Naive thymus-derived CD4-positive, alpha-beta T cell (primary cell): ENCODE measurements at regions of chr7 and their contacts with region 1.

Region 1: GRCh38 chr7:26667500-26668133 is 196.8 kb downstream of the SKAP2 start:
- DNase-seq: peak in 8 of 9 donors; percentile 39 to 78 (median 64)
- ATAC-seq: peak; percentile 77
- H3K4me3 ChIP-seq: no peak overlapping the region
- H3K4me3 Mint-ChIP-seq: no peak overlapping the region
- H3K27ac ChIP-seq: no peak overlapping the region
- H3K27ac Mint-ChIP-seq: no peak overlapping the region
- H3K4me1 ChIP-seq: peaks cover 0 to 4% of the 10 kb centered on the region in 2 donors
- H3K4me1 Mint-ChIP-seq: peaks cover 0 to 23% (median 17%) of the 10 kb centered on the region in 7 donors
- H3K27me3 ChIP-seq: no peaks in the 10 kb centered on the region
- H3K27me3 Mint-ChIP-seq: peaks cover 9 to 61% (median 14%) of the 10 kb centered on the region in 5 donors

Region 2: DNA sequence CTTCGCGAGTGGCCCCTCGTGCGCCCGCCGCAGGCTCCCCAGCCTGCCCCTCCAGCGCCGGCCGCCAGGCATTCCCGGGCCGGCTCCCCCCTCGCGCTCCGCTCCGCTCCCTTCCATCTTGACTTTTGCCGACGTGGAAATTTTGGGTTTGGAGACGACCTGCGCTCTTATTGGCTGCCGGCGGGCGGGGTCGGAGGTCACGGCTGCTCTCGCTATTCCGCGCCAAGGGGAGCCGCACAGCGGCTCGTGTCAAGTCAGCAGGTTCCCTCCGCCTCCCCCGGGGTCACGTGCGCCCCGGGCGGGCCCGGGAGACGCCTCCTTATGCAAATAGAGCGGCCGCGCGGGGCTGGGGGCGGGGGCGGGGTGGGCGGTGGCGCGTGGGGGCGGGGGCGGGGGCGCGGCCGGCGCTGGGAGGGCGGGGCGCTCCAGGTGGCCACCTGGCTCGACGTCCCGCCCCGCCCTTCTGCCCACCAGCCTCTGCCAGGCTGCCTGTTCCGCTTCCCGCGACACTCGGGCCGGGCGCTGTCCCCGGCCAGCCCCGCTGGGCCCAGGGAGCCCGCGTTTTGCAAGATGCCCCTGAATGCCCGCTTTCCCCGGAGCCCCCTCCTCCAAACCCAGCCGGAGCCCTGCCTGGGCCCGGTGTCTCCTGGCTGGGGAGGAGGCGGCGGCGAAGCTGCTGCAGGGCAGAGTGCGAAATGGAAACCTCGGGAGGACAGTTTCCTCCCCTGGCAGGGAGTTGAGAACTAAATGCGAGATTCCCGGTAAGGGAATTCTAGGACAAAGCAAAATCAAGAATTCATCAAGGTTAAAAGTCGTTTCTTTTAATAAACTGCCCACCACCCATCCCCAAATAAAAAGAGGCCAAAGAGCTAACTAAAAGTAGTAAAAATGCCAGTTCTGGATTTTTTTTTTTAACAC is 716.3 kb before region 1 on chr7:
- CTCF ChIA-PET with region 1: no interaction called
- POLR2A ChIA-PET with region 1: no interaction called
- intact Hi-C with region 1: loop called in 1 of 2 experiments (anchors 5 kb)
- DNase-seq: peak; percentile 70 to 94 (median 87)
- ATAC-seq: peak; percentile 99
- H3K4me3 ChIP-seq: peak overlapping the region; percentile 61
- H3K4me3 Mint-ChIP-seq: peak overlapping the region; percentile 87 to 94 (median 92)
- H3K27ac ChIP-seq: peak overlapping the region; percentile 52
- H3K27ac Mint-ChIP-seq: peak overlapping the region in 7 of 9 donors; percentile 45 to 87 (median 81)
- H3K4me1 ChIP-seq: peaks cover 7 to 14% of the 10 kb centered on the region in 2 donors
- H3K4me1 Mint-ChIP-seq: peaks cover 16 to 31% (median 20%) of the 10 kb centered on the region in 7 donors
- H3K27me3 ChIP-seq: no peaks in the 10 kb centered on the region
- H3K27me3 Mint-ChIP-seq: peaks cover 0 to 22% (median 5%) of the 10 kb centered on the region in 5 donors

Region 3: DNA sequence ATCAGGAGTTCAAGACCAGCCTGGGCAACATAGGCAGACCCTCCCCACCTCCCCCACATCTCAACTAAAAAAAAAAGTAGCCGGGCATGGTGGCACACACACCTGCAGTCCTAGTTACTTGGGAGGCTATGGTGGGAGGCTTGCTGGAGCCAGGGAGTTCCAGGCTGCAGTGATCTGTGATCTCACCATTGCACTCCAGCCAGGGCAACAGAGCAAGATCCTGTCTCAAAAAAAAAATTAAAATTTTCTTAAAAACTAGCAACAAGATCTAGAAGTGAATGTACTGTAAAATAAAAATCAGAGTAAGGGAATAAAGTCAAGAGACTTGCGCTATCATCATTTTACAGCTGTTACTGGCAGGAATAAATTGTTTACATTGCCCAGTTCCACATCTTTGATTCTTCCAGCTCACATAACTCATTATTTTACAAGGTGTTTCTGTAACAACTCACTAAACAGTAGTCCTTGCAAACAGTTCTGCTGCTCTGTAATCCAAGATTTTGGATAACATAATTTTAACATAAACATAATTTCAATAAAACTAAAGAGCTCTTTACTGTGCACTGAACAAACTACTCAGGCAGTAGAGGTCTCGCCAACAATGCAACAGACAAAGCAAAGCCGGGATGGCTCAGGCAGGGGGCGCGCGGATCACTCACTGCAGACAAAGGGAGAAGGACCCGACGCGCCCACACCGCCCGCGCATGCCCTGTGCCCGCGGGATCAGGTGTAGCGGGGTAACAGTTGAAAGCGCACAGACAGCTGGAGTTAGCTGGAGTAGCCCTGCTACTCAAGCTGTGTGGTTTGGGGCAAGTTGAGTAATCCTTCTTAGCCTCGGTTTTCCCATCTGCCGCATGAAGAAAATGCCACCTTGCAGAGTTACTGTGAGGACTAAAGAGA is 588.9 kb before region 1 on chr7:
- CTCF ChIA-PET with region 1: interaction called, 3 read pairs
- POLR2A ChIA-PET with region 1: no interaction called
- intact Hi-C with region 1: loop called (anchors 2 to 5 kb)
- DNase-seq: peak; percentile 68 to 86 (median 80)
- ATAC-seq: peak; percentile 99
- H3K4me3 ChIP-seq: no peak overlapping the region
- H3K4me3 Mint-ChIP-seq: peak overlapping the region in 7 of 10 donors; percentile 30 to 68 (median 51)
- H3K27ac ChIP-seq: no peak overlapping the region
- H3K27ac Mint-ChIP-seq: no peak overlapping the region
- H3K4me1 ChIP-seq: peaks cover 0 to 10% of the 10 kb centered on the region in 2 donors
- H3K4me1 Mint-ChIP-seq: peaks cover 0 to 10% (median 6%) of the 10 kb centered on the region in 7 donors
- H3K27me3 ChIP-seq: peaks cover 0 to 6% of the 10 kb centered on the region in 2 donors
- H3K27me3 Mint-ChIP-seq: peaks cover 15 to 84% (median 33%) of the 10 kb centered on the region in 5 donors

Region 4: DNA sequence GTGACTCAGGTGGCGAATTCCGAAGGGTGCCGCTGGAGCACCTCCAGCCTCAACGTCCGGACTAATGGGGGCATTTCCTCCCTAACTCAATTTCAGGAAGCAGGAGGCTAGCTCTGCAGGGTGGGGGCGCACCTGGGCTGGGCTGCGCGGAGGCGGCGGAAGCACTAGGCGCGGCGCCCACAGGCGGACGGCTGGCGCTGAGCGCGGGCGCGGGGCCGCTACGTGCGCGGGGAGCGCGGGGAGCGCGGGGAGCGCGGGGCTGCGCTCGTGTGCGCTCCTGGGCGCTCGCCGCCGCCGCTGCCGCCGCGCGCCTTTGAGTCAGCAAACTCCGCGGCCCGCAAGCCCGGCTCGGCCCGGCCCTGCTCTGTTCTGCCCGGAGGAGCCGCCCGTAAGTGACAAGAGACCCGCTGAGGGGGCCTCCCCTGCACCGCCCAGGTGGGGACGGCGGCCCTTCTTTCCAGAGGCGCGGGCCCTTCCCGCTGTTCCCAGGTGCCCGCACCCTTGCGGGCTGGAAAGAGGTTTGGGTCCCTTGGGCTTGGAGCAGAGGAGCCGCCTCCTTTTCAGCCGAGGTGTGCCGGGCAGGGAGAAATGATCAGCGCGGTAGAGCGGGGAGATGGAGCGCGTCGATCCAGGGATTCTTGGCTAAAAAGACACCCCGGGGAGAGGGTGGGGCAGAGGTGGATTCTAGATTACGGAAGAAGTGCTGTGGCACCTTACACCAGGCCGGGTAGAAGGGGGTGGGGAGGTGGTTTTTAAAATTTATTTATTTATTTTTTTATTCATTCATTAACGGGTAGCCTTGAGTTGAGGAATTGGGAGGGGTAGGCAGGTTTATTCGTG is 375.7 kb before region 1 on chr7 and contains the start of gene SNX10:
- CTCF ChIA-PET with region 1: no interaction called
- POLR2A ChIA-PET with region 1: no interaction called
- intact Hi-C with region 1: loop called (anchors 5 kb)
- DNase-seq: peak; percentile 52 to 74 (median 72)
- ATAC-seq: peak; percentile 90
- H3K4me3 ChIP-seq: peak within 1 kb of the TSS; percentile 88
- H3K4me3 Mint-ChIP-seq: peak within 1 kb of the TSS; percentile 78 to 94 (median 91)
- H3K27ac ChIP-seq: peak within 1 kb of the TSS; percentile 58
- H3K27ac Mint-ChIP-seq: peak within 1 kb of the TSS; percentile 45 to 91 (median 82)
- H3K4me1 ChIP-seq: peaks cover 25 to 30% of the 10 kb centered on the region in 2 donors
- H3K4me1 Mint-ChIP-seq: peaks cover 22 to 41% (median 35%) of the 10 kb centered on the region in 7 donors
- H3K27me3 ChIP-seq: no peaks in the 10 kb centered on the region
- H3K27me3 Mint-ChIP-seq: peaks cover 0 to 13% (median 0%) of the 10 kb centered on the region in 5 donors
- total RNA-seq, gene SNX10: 5.0 to 37.0 (median 6.3) TPM

Region 5: GRCh38 chr7:26388256-26388655 is 279.4 kb before region 1 on chr7:
- CTCF ChIA-PET with region 1: no interaction called
- POLR2A ChIA-PET with region 1: no interaction called
- intact Hi-C with region 1: no loop called
- DNase-seq: no peak
- ATAC-seq: peak; percentile 38
- H3K4me3 ChIP-seq: no peak overlapping the region
- H3K4me3 Mint-ChIP-seq: no peak overlapping the region
- H3K27ac ChIP-seq: no peak overlapping the region
- H3K27ac Mint-ChIP-seq: no peak overlapping the region
- H3K4me1 ChIP-seq: no peaks in the 10 kb centered on the region
- H3K4me1 Mint-ChIP-seq: peaks cover 0 to 2% (median 0%) of the 10 kb centered on the region in 7 donors
- H3K27me3 ChIP-seq: peaks cover 4 to 5% of the 10 kb centered on the region in 2 donors
- H3K27me3 Mint-ChIP-seq: peaks cover 38 to 63% (median 49%) of the 10 kb centered on the region in 5 donors

Region 6: GRCh38 chr7:26500749-26501352 is 166.8 kb before region 1 on chr7:
- CTCF ChIA-PET with region 1: interaction called, 5 read pairs
- POLR2A ChIA-PET with region 1: no interaction called
- intact Hi-C with region 1: loop called (anchors 1 to 5 kb)
- DNase-seq: peak in 3 of 9 donors; percentile 7 to 18 (median 9)
- ATAC-seq: peak; percentile 46
- H3K4me3 ChIP-seq: no peak overlapping the region
- H3K4me3 Mint-ChIP-seq: no peak overlapping the region
- H3K27ac ChIP-seq: no peak overlapping the region
- H3K27ac Mint-ChIP-seq: no peak overlapping the region
- H3K4me1 ChIP-seq: no peaks in the 10 kb centered on the region
- H3K4me1 Mint-ChIP-seq: peaks cover 0 to 2% (median 0%) of the 10 kb centered on the region in 7 donors
- H3K27me3 ChIP-seq: no peaks in the 10 kb centered on the region
- H3K27me3 Mint-ChIP-seq: peaks cover 0 to 30% (median 9%) of the 10 kb centered on the region in 5 donors

Region 7: DNA sequence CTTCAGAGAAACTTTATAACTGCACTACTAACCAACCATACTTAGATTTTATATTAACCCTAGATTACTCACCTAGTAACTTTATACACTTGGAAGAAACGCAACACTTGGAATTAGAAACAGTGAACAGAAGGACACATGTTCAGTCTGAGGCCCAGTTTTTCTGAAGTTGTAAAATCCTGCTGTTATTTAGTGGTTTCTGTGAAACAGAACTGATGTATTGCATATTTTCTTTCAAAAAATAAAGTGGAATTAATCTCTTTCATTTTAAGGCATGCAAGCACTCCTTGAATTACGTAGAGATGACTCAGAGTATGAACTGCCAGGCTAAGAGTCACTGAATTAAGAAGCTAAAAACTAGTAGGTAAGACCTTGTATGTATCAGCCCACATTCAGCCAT is 19.1 kb before region 1 on chr7:
- CTCF ChIA-PET with region 1: no interaction called
- POLR2A ChIA-PET with region 1: no interaction called
- intact Hi-C with region 1: no loop called
- DNase-seq: no peak
- ATAC-seq: no peak
- H3K4me3 ChIP-seq: no peak overlapping the region
- H3K4me3 Mint-ChIP-seq: no peak overlapping the region
- H3K27ac ChIP-seq: no peak overlapping the region
- H3K27ac Mint-ChIP-seq: no peak overlapping the region
- H3K4me1 ChIP-seq: no peaks in the 10 kb centered on the region
- H3K4me1 Mint-ChIP-seq: peaks cover 0 to 2% (median 0%) of the 10 kb centered on the region in 7 donors
- H3K27me3 ChIP-seq: no peaks in the 10 kb centered on the region
- H3K27me3 Mint-ChIP-seq: peaks cover 8 to 48% (median 17%) of the 10 kb centered on the region in 5 donors